IMR-90 (cell line): ENCODE measurements at regions of chr7 and their contacts with region 1.

Region 1: DNA sequence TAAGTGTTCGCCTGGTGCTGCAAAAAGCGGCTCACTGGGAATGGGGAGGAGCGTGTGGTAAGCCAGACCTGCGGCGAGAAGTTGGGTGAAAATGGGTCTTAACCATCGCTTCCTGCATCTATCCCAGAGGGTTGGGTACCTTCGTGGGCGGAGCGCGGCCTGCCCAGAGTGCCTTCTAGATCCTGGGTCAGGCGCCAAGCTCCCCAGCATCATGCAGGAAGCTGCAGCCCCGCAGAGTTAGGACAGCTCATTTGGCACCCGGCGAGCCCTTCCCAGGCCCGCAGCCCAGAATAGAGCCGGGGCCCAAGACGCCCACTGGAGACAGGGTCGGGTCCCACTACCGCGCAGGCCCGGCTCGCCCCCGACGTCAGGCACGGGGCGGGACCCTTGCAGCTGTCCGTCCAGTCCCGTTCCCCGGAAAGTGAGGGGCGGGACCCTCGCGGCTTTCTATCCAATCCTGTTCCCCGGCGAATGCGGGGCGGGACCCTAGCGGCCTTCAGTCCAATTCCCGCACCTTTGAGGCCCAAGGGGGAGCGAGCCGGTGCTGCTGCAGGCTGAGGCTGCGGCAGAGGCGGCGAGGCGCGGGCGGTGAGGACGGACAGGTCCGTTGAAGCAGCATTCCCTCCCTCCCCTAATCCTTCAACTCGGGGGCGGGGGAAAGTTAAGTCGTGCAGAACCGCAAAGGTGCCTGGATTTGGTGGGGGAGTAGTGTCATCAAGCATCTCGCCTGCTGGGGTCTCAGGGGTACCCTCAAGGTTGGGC is at the start of gene CROT:
- DNase-seq: peak; percentile 91
- ATAC-seq: peak; percentile 99
- H3K4me3 ChIP-seq: peak within 1 kb of the TSS; percentile 68
- H3K27ac ChIP-seq: peak within 1 kb of the TSS; percentile 88
- H3K4me1 ChIP-seq: peaks cover 3% of the 10 kb centered on the region
- H3K27me3 ChIP-seq: no peaks in the 10 kb centered on the region
- CTCF ChIP-seq: no peak
- POLR2A ChIP-seq: no peak
- RAD21 ChIP-seq: no peak
- total RNA-seq, gene CROT: 7.5 and 14.4 TPM in 2 replicates

Region 2: DNA sequence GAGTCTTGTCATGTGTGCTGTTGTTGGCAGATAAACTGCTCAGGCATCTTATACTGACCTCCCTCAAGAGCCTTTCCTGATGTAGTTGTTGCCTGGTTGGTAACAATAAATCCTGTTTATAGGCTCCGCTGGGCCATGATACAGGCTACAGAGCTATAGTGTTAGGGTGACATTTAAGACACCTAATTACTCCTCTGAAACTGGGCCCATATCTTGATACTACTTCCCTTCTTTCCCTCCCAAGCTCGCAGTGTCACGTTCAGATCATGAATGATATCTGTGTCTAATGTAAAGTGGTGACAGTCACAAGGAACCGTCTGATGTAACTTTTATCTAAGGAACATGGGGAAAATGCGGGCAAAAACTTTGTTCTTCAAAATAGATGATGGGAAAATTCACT is 35.6 kb after region 1 on chr7:
- CTCF ChIA-PET with region 1: no interaction called
- POLR2A ChIA-PET with region 1: no interaction called
- dilution Hi-C with region 1: no loop called
- in situ Hi-C with region 1: no loop called
- intact Hi-C with region 1: loop called (anchors 5 kb)
- DNase-seq: no peak
- ATAC-seq: no peak
- H3K4me3 ChIP-seq: no peak overlapping the region
- H3K27ac ChIP-seq: no peak overlapping the region
- H3K4me1 ChIP-seq: no peaks in the 10 kb centered on the region
- H3K27me3 ChIP-seq: no peaks in the 10 kb centered on the region
- CTCF ChIP-seq: no peak
- POLR2A ChIP-seq: no peak
- RAD21 ChIP-seq: no peak

Region 3: DNA sequence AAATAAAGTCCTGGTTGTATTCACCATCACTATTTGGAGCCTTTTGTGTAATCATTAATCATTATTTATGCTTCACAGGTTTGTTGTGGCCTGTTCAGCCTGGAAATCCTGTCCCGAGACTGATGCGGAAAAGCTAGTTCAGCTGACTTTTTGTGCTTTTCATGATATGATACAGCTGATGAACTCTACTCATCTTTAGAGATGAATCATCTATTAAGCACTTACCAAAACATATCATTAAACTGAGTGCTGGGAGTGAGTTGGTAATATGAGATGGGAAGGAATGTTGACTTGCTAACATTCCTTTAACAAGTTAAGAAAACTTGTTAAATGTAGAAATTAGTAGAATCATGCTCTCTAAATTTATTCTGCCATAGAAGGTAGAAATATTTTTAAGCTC is 53.1 kb after region 1 on chr7:
- CTCF ChIA-PET with region 1: interaction called, 3 read pairs
- POLR2A ChIA-PET with region 1: no interaction called
- dilution Hi-C with region 1: no loop called
- in situ Hi-C with region 1: no loop called
- intact Hi-C with region 1: loop called (anchors 5 kb)
- DNase-seq: peak; percentile 79
- ATAC-seq: peak; percentile 86
- H3K4me3 ChIP-seq: no peak overlapping the region
- H3K27ac ChIP-seq: peak overlapping the region; percentile 46; the same call in 1 of the 2 replicates
- H3K4me1 ChIP-seq: peaks cover 9% of the 10 kb centered on the region
- H3K27me3 ChIP-seq: no peaks in the 10 kb centered on the region
- CTCF ChIP-seq: no peak
- POLR2A ChIP-seq: no peak
- RAD21 ChIP-seq: no peak

Region 4: DNA sequence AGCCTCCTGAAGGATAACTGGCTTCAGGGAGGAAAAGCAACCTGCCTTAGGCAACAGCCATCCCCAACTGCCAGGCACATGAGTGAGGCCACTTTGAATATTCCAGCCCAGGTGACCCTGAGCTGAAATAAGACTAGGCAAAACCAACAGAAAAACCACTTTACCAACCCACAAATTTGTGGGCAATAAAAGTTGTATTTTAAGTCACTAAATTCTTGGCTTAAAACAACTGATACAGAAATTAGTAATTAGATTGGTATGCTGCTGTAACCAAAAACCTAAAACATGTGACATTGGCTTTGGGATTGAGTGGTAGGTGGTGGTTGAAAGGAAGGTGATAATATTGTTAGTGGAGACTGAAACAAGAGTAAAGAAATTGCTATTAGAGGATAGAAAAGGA is 90.2 kb after region 1 on chr7:
- CTCF ChIA-PET with region 1: no interaction called
- POLR2A ChIA-PET with region 1: no interaction called
- dilution Hi-C with region 1: no loop called
- in situ Hi-C with region 1: no loop called
- intact Hi-C with region 1: no loop called
- DNase-seq: peak; percentile 13
- ATAC-seq: no peak
- H3K4me3 ChIP-seq: no peak overlapping the region
- H3K27ac ChIP-seq: no peak overlapping the region
- H3K4me1 ChIP-seq: peaks cover 2% of the 10 kb centered on the region
- H3K27me3 ChIP-seq: peaks cover 6% of the 10 kb centered on the region
- CTCF ChIP-seq: no peak
- POLR2A ChIP-seq: no peak
- RAD21 ChIP-seq: no peak